Ascending aorta (tissue), 2 donors: ENCODE measurements at regions of chr4 and their contacts with region 1.

Region 1: DNA sequence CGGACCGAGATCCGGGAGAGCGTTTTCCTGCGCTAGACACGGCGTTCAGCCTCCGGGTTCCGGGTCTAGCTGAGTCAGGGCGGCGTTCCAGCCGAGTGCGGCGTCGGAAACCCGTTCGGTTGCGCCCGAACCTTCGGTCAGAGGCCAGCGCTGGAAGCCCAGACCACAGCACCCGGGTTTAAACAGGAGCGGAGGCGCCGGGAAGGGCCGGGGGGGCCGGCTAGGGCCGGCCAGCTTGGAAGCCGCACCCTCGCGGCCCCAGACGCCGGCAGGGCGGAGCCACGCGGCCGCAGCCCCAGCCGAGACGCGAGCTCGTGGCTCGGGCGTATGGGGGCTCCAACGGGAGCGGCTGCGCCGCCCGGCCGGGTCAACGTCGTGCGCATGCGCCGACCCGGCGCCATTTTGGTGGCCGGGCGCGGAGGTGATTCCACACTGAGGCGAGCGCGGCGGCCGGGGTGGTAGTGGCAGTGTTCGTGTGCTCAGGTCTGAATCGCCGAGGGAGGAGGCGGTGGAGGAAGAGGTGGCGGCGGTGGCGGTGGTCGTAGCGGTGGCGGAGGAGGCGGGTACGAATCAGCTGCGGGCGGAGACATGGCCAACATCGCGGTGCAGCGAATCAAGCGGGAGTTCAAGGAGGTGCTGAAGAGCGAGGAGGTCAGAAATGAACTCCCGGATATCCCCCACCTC is at the start of gene UBE2K:
- DNase-seq: peak; percentile 50 to 94
- H3K4me3 ChIP-seq: peak within 1 kb of the TSS; percentile 88 to 92
- H3K27ac ChIP-seq: peak within 1 kb of the TSS; percentile 91 to 92
- H3K4me1 ChIP-seq: peaks cover 0 to 7% of the 10 kb centered on the region in 2 donors
- H3K27me3 ChIP-seq: no peaks in the 10 kb centered on the region
- CTCF ChIP-seq: peak in 1 of 3 experiments; percentile 6
- total RNA-seq, gene UBE2K: 9.7 TPM

Region 2: GRCh38 chr4:39458505-39459300 is 239.2 kb before region 1 on chr4 and contains the starts of genes LIAS and RPL9:
- intact Hi-C with region 1: loop called (anchors 2 kb)
- DNase-seq: peak; percentile 90 to 98
- H3K4me3 ChIP-seq: peak within 1 kb of the TSS; percentile 82 to 96
- H3K27ac ChIP-seq: peak within 1 kb of the TSS; percentile 96 to 98
- H3K4me1 ChIP-seq: peaks cover 2 to 16% of the 10 kb centered on the region in 2 donors
- H3K27me3 ChIP-seq: no peaks in the 10 kb centered on the region
- CTCF ChIP-seq: peak in 1 of 3 experiments; percentile 24
- total RNA-seq, gene LIAS: 2.9 TPM
- total RNA-seq, gene RPL9: 1,701 TPM

Region 3: DNA sequence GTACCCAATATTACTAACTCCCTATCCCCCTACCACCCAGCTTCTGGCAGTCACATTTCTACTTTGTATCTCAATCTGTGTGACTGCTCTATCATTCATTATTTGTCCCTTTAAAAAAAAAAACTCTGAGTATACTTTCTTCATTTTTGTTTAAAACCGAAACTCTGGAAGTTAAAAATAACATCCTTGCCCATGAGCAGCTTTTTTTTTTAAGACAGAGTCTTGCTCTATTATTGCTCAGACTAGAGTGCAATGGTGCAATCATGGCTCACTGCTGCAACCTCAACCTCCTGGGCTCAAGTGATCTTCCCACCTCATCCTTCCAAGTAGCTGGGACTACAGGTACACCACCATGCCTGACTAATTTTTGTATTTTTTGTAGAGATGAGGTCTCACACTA is 15.8 kb after region 1 on chr4:
- intact Hi-C with region 1: loop called (anchors 1 kb)
- DNase-seq: no peak
- H3K4me3 ChIP-seq: no peak overlapping the region
- H3K27ac ChIP-seq: peak overlapping the region; percentile 33 to 38
- H3K4me1 ChIP-seq: peaks cover 3 to 24% of the 10 kb centered on the region in 2 donors
- H3K27me3 ChIP-seq: no peaks in the 10 kb centered on the region
- CTCF ChIP-seq: no peak

Region 4: GRCh38 chr4:39823191-39823590 is 125.3 kb after region 1 on chr4:
- intact Hi-C with region 1: loop called (anchors 10 kb)
- DNase-seq: no peak
- H3K4me3 ChIP-seq: no peak overlapping the region
- H3K27ac ChIP-seq: no peak overlapping the region
- H3K4me1 ChIP-seq: no peaks in the 10 kb centered on the region
- H3K27me3 ChIP-seq: no peaks in the 10 kb centered on the region
- CTCF ChIP-seq: no peak

Region 5: GRCh38 chr4:39889226-39889625 is 191.3 kb after region 1 on chr4:
- intact Hi-C with region 1: no loop called
- DNase-seq: no peak
- H3K4me3 ChIP-seq: no peak overlapping the region
- H3K27ac ChIP-seq: no peak overlapping the region
- H3K4me1 ChIP-seq: no peaks in the 10 kb centered on the region
- H3K27me3 ChIP-seq: no peaks in the 10 kb centered on the region
- CTCF ChIP-seq: no peak

Region 6: GRCh38 chr4:40056716-40057585 is 359.1 kb after region 1 on chr4 and contains the start of gene N4BP2:
- intact Hi-C with region 1: loop called (anchors 2 kb)
- DNase-seq: peak; percentile 21 to 88
- H3K4me3 ChIP-seq: peak within 1 kb of the TSS; percentile 72 to 98
- H3K27ac ChIP-seq: peak within 1 kb of the TSS; percentile 97 to 100
- H3K4me1 ChIP-seq: peaks cover 0 to 11% of the 10 kb centered on the region in 2 donors
- H3K27me3 ChIP-seq: no peaks in the 10 kb centered on the region
- CTCF ChIP-seq: peak; percentile 47 to 77 (median 74)
- total RNA-seq, gene N4BP2: 0.53 TPM